ENCODE measurements at regions of chr1 and their contacts with region 1.

Region 1: DNA sequence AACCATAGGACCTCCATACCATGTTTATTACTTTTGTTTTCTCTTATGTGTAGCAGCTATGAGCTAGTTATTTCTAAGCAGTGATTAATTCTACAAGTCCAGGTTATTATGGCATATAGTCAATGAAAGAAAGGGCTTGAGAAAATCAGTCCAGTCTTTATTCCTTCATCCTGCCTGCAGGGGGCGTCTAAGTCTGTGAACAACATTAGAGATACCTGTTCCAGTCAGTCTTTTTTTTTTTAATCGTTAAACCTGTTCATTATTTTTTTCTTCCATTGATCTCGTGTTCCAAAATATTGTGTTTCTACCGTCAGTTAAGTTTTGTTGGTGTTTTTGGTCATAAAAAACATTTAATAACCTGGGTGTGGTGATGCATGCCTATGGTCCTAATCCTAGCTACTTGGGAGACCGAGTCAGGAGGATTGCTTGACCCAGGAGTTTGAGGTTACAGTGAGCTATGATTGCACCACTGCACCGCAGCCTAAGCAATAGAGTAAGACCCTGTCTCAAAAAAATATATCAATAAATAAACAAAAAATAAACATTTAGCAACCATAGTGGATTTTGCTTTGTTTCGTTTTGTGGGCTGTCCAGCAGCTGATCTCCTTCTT is 29.4 kb upstream of the CD2 start:
- DNase-seq: peak; percentile 86
- H3K4me3 Mint-ChIP-seq: no peak overlapping the region
- H3K27ac Mint-ChIP-seq: no peak overlapping the region
- H3K4me1 Mint-ChIP-seq: peaks cover 7% of the 10 kb centered on the region
- H3K27me3 Mint-ChIP-seq: no peaks in the 10 kb centered on the region
- CTCF ChIP-seq: peak; percentile 69

Region 2: GRCh38 chr1:117054068-117054467 is 329.2 kb after region 1 on chr1:
- CTCF ChIA-PET with region 1: interaction called, 11 read pairs
- POLR2A ChIA-PET with region 1: interaction called, 6 read pairs
- intact Hi-C with region 1: no loop called
- DNase-seq: no peak
- H3K4me3 Mint-ChIP-seq: no peak overlapping the region
- H3K27ac Mint-ChIP-seq: no peak overlapping the region
- H3K4me1 Mint-ChIP-seq: peaks cover 22% of the 10 kb centered on the region
- H3K27me3 Mint-ChIP-seq: no peaks in the 10 kb centered on the region
- CTCF ChIP-seq: no peak

Region 3: GRCh38 chr1:117121776-117122697 is 397.2 kb after region 1 on chr1:
- CTCF ChIA-PET with region 1: no interaction called
- POLR2A ChIA-PET with region 1: no interaction called
- intact Hi-C with region 1: loop called (anchors 10 kb)
- DNase-seq: peak; percentile 95
- H3K4me3 Mint-ChIP-seq: peak overlapping the region; percentile 84
- H3K27ac Mint-ChIP-seq: peak overlapping the region; percentile 86
- H3K4me1 Mint-ChIP-seq: no peaks in the 10 kb centered on the region
- H3K27me3 Mint-ChIP-seq: no peaks in the 10 kb centered on the region
- CTCF ChIP-seq: peak; percentile 37

Measured in MCF 10A (cell line).